CD4-positive, alpha-beta memory T cell (primary cell): ENCODE measurements at regions of chr19 and their contacts with region 1.

Region 1: DNA sequence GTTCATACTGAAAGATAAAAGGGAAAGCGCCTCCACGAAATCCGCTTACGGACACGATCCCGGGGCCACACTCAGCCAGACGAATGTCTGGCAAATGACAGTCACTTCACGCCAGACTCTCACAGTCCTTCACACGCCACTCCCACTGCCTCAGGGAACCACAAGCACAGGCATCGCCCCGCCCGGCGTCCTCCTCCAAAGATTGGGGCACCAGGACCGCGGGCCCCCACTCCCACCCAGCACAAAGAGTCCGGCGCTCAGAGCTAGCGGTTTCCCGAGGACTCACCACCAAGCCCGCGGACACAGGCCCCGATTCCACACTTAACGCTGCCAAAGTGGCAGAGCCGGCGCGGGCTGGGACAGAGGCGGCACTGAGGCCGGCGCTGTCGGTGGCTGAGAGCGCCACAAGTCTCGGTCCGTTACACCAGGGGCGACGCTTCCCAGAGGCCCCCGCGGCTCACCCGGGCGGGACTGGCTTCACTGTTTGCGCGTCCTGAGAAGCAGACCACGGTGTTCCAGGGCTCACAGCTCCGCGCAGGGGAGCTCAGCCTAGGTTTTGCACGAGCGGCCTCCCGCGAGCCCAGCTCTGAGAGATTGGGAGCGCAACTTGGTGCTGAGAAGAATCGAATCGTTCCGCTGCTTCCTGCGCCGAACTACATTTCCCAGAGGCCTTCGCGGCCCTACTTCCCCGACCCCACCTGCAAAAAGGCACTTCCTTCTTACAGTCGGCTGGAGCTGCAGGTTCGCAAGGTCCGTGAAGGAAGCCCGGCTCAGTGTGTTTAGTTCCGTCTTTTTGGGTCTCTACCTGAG is at the start of gene ZNF569:
- DNase-seq: peak; percentile 91 to 96 (median 93)
- H3K4me3 ChIP-seq: peak within 1 kb of the TSS; percentile 63 to 83
- H3K4me3 Mint-ChIP-seq: peak within 1 kb of the TSS; percentile 95 to 99 (median 97)
- H3K27ac ChIP-seq: peak within 1 kb of the TSS; percentile 74
- H3K27ac Mint-ChIP-seq: peak within 1 kb of the TSS; percentile 95 to 99 (median 98)
- H3K4me1 ChIP-seq: peaks cover 31% of the 10 kb centered on the region
- H3K4me1 Mint-ChIP-seq: peaks cover 28 to 45% (median 35%) of the 10 kb centered on the region in 4 donors
- H3K27me3 ChIP-seq: no peaks in the 10 kb centered on the region
- H3K27me3 Mint-ChIP-seq: no peaks in the 10 kb centered on the region
- total RNA-seq, gene ZNF569: 13.5 to 14.9 TPM

Region 2: GRCh38 chr19:36378625-36379509 is 1088.1 kb before region 1 on chr19 and contains the start of gene ZFP14:
- CTCF ChIA-PET with region 1: no interaction called
- POLR2A ChIA-PET with region 1: interaction called, 4 read pairs
- intact Hi-C with region 1: loop called (anchors 5 kb)
- DNase-seq: peak; percentile 92 to 96 (median 95)
- H3K4me3 ChIP-seq: peak within 1 kb of the TSS; percentile 76 to 87
- H3K4me3 Mint-ChIP-seq: peak within 1 kb of the TSS; percentile 87 to 96 (median 94)
- H3K27ac ChIP-seq: peak within 1 kb of the TSS; percentile 76
- H3K27ac Mint-ChIP-seq: peak within 1 kb of the TSS; percentile 81 to 97 (median 93)
- H3K4me1 ChIP-seq: peaks cover 18% of the 10 kb centered on the region
- H3K4me1 Mint-ChIP-seq: peaks cover 13 to 34% (median 18%) of the 10 kb centered on the region in 4 donors
- H3K27me3 ChIP-seq: no peaks in the 10 kb centered on the region
- H3K27me3 Mint-ChIP-seq: no peaks in the 10 kb centered on the region
- total RNA-seq, gene ZFP14: 20.7 to 21.2 TPM

Region 3: GRCh38 chr19:36915992-36916830 is 550.8 kb before region 1 on chr19 and contains the starts of genes ZNF568 and ZNF829:
- CTCF ChIA-PET with region 1: no interaction called
- POLR2A ChIA-PET with region 1: no interaction called
- intact Hi-C with region 1: loop called (anchors 1 kb)
- DNase-seq: peak; percentile 92 to 98 (median 95)
- H3K4me3 ChIP-seq: peak within 1 kb of the TSS; percentile 60 to 88
- H3K4me3 Mint-ChIP-seq: peak within 1 kb of the TSS; percentile 84 to 97 (median 94)
- H3K27ac ChIP-seq: peak within 1 kb of the TSS; percentile 93
- H3K27ac Mint-ChIP-seq: peak within 1 kb of the TSS; percentile 81 to 97 (median 96)
- H3K4me1 ChIP-seq: peaks cover 14% of the 10 kb centered on the region
- H3K4me1 Mint-ChIP-seq: peaks cover 19 to 39% (median 28%) of the 10 kb centered on the region in 4 donors
- H3K27me3 ChIP-seq: no peaks in the 10 kb centered on the region
- H3K27me3 Mint-ChIP-seq: no peaks in the 10 kb centered on the region
- total RNA-seq, gene ZNF568: 18.8 to 20.3 TPM
- total RNA-seq, gene ZNF829: 8.5 to 9.8 TPM

Region 4: GRCh38 chr19:37217855-37218591 is 249.0 kb before region 1 on chr19 and contains the start of gene ZNF383:
- CTCF ChIA-PET with region 1: no interaction called
- POLR2A ChIA-PET with region 1: interaction called, 5 read pairs
- intact Hi-C with region 1: loop called (anchors 2 kb)
- DNase-seq: peak; percentile 80 to 87 (median 83)
- H3K4me3 ChIP-seq: peak within 1 kb of the TSS; percentile 85 to 99
- H3K4me3 Mint-ChIP-seq: peak within 1 kb of the TSS; percentile 89 to 98 (median 91)
- H3K27ac ChIP-seq: peak within 1 kb of the TSS; percentile 80
- H3K27ac Mint-ChIP-seq: peak within 1 kb of the TSS; percentile 88 to 98 (median 96)
- H3K4me1 ChIP-seq: peaks cover 16% of the 10 kb centered on the region
- H3K4me1 Mint-ChIP-seq: peaks cover 19 to 40% (median 31%) of the 10 kb centered on the region in 4 donors
- H3K27me3 ChIP-seq: no peaks in the 10 kb centered on the region
- H3K27me3 Mint-ChIP-seq: no peaks in the 10 kb centered on the region
- total RNA-seq, gene ZNF383: 32.0 to 34.0 TPM

Region 5: GRCh38 chr19:37362733-37363132 is 104.3 kb before region 1 on chr19:
- CTCF ChIA-PET with region 1: no interaction called
- POLR2A ChIA-PET with region 1: no interaction called
- intact Hi-C with region 1: no loop called
- DNase-seq: no peak
- H3K4me3 ChIP-seq: no peak overlapping the region
- H3K4me3 Mint-ChIP-seq: no peak overlapping the region
- H3K27ac ChIP-seq: no peak overlapping the region
- H3K27ac Mint-ChIP-seq: no peak overlapping the region
- H3K4me1 ChIP-seq: no peaks in the 10 kb centered on the region
- H3K4me1 Mint-ChIP-seq: no peaks in the 10 kb centered on the region
- H3K27me3 ChIP-seq: no peaks in the 10 kb centered on the region
- H3K27me3 Mint-ChIP-seq: no peaks in the 10 kb centered on the region

Region 6: GRCh38 chr19:37403403-37403802 is 63.6 kb before region 1 on chr19:
- CTCF ChIA-PET with region 1: no interaction called
- POLR2A ChIA-PET with region 1: no interaction called
- intact Hi-C with region 1: no loop called
- DNase-seq: no peak
- H3K4me3 ChIP-seq: no peak overlapping the region
- H3K4me3 Mint-ChIP-seq: no peak overlapping the region
- H3K27ac ChIP-seq: no peak overlapping the region
- H3K27ac Mint-ChIP-seq: no peak overlapping the region
- H3K4me1 ChIP-seq: no peaks in the 10 kb centered on the region
- H3K4me1 Mint-ChIP-seq: no peaks in the 10 kb centered on the region
- H3K27me3 ChIP-seq: no peaks in the 10 kb centered on the region
- H3K27me3 Mint-ChIP-seq: no peaks in the 10 kb centered on the region

Region 7: DNA sequence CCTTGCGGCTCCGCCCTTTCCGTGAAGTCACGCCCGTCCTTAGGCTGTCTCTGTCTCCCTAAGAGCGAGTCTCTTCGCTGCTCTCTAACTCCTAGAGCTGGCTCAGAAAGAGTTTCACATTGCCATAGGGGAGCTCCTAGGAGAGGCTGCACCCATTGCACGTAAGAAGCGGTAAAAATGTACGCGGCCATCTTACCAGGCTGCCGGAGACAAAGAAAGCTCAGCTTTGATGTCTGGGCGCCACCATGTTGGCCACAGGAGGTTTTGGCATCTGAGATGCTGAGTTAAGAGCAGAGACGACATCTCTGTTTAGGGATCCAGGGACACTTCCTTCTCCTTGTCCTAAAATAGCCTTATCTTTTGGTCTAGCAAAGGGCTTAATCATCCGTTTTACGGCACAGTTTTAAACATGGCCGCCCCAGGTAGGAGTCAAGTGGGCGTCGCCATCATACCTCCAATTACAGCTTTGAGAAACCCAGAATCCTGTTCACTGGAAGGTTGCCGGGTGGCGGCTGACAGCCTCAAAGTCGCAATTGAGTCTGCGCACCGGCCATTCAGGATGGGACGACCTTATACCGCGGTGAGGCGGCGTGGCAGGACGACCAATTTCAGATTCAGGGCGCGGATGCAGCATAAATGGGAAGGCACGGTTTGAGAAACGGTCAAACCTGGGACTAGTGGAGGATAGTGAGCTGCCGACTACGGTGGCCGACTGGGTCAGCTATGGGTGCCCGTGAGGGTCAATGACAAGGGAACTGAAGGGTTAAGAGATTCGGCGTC is 39.6 kb after region 1 on chr19 and contains the start of gene ZNF793:
- CTCF ChIA-PET with region 1: interaction called, 3 read pairs
- POLR2A ChIA-PET with region 1: interaction called, 94 read pairs
- intact Hi-C with region 1: loop called (anchors 1 kb)
- DNase-seq: peak; percentile 85 to 88 (median 87)
- H3K4me3 ChIP-seq: peak within 1 kb of the TSS; percentile 57 to 78
- H3K4me3 Mint-ChIP-seq: no peak within 1 kb of the TSS
- H3K27ac ChIP-seq: peak within 1 kb of the TSS; percentile 88
- H3K27ac Mint-ChIP-seq: no peak within 1 kb of the TSS
- H3K4me1 ChIP-seq: peaks cover 17% of the 10 kb centered on the region
- H3K4me1 Mint-ChIP-seq: peaks cover 0 to 2% (median 0%) of the 10 kb centered on the region in 4 donors
- H3K27me3 ChIP-seq: no peaks in the 10 kb centered on the region
- H3K27me3 Mint-ChIP-seq: no peaks in the 10 kb centered on the region
- total RNA-seq, gene ZNF793: 10.2 to 13.8 TPM

Region 8: GRCh38 chr19:37779127-37780005 is 312.4 kb after region 1 on chr19 and contains the start of gene ZNF573:
- CTCF ChIA-PET with region 1: no interaction called
- POLR2A ChIA-PET with region 1: interaction called, 11 read pairs
- intact Hi-C with region 1: loop called (anchors 1 kb)
- DNase-seq: peak; percentile 87 to 99 (median 91)
- H3K4me3 ChIP-seq: peak within 1 kb of the TSS; percentile 74 to 89
- H3K4me3 Mint-ChIP-seq: peak within 1 kb of the TSS; percentile 90 to 99 (median 94)
- H3K27ac ChIP-seq: peak within 1 kb of the TSS; percentile 90
- H3K27ac Mint-ChIP-seq: peak within 1 kb of the TSS; percentile 86 to 100 (median 98)
- H3K4me1 ChIP-seq: peaks cover 18% of the 10 kb centered on the region
- H3K4me1 Mint-ChIP-seq: peaks cover 24 to 46% (median 35%) of the 10 kb centered on the region in 4 donors
- H3K27me3 ChIP-seq: no peaks in the 10 kb centered on the region
- H3K27me3 Mint-ChIP-seq: no peaks in the 10 kb centered on the region
- total RNA-seq, gene ZNF573: 30.5 to 31.1 TPM